ENCODE measurements at regions of chr19 and their contacts with region 1.

Region 1: GRCh38 chr19:11203194-11204075 is 6.1 kb upstream of the KANK2 start:
- DNase-seq: peak; percentile 79 to 96 (median 92)
- ATAC-seq: peak; percentile 89
- H3K4me3 ChIP-seq: no peak overlapping the region
- H3K27ac ChIP-seq: 0 out of 3 replicates have a peak overlapping the region, but pooled peaks have one; percentile 16
- H3K4me1 ChIP-seq: peaks cover 12 to 32% of the 10 kb centered on the region in 2 experiments
- H3K27me3 ChIP-seq: no peaks in the 10 kb centered on the region
- CTCF ChIP-seq: peak; percentile 77 to 89 (median 88)
- EP300 ChIP-seq: no peak
- POLR2A ChIP-seq: no peak
- RAD21 ChIP-seq: peak; percentile 79 to 85

Region 2: GRCh38 chr19:10946964-10947657 is 256.3 kb before region 1 on chr19:
- CTCF ChIA-PET with region 1: no interaction called
- POLR2A ChIA-PET with region 1: no interaction called
- in situ Hi-C with region 1: no loop called
- intact Hi-C with region 1: loop called (anchors 2 kb)
- DNase-seq: no peak
- ATAC-seq: no peak
- H3K4me3 ChIP-seq: no peak overlapping the region
- H3K27ac ChIP-seq: no peak overlapping the region
- H3K4me1 ChIP-seq: peaks cover 4 to 6% of the 10 kb centered on the region in 2 experiments; a peak in 2 of 5 replicates
- H3K27me3 ChIP-seq: no peaks in the 10 kb centered on the region
- CTCF ChIP-seq: no peak
- EP300 ChIP-seq: no peak
- POLR2A ChIP-seq: no peak
- RAD21 ChIP-seq: no peak

Region 3: GRCh38 chr19:11035441-11036377 is 167.7 kb before region 1 on chr19:
- CTCF ChIA-PET with region 1: interaction called, 6 read pairs
- POLR2A ChIA-PET with region 1: no interaction called
- in situ Hi-C with region 1: loop called (anchors 5 kb)
- intact Hi-C with region 1: loop called (anchors 1 kb)
- DNase-seq: peak; percentile 77 to 92 (median 86)
- ATAC-seq: peak; percentile 99
- H3K4me3 ChIP-seq: no peak overlapping the region
- H3K27ac ChIP-seq: no peak overlapping the region
- H3K4me1 ChIP-seq: peaks cover 0 to 13% of the 10 kb centered on the region in 2 experiments; a peak in 1 of 5 replicates
- H3K27me3 ChIP-seq: no peaks in the 10 kb centered on the region
- CTCF ChIP-seq: peak; percentile 86 to 93 (median 89)
- EP300 ChIP-seq: no peak
- POLR2A ChIP-seq: no peak
- RAD21 ChIP-seq: peak; percentile 85 to 91

Region 4: GRCh38 chr19:11125994-11126685 is 77.3 kb before region 1 on chr19:
- CTCF ChIA-PET with region 1: interaction called, 8 read pairs
- POLR2A ChIA-PET with region 1: interaction called, 5 read pairs
- in situ Hi-C with region 1: loop called (anchors 5 kb)
- intact Hi-C with region 1: no loop called
- DNase-seq: peak; percentile 57 to 81 (median 64)
- ATAC-seq: peak; percentile 83
- H3K4me3 ChIP-seq: no peak overlapping the region
- H3K27ac ChIP-seq: no peak overlapping the region; the same call in 2 of the 3 replicates
- H3K4me1 ChIP-seq: peaks cover 0 to 4% of the 10 kb centered on the region in 2 experiments; a peak in 2 of 5 replicates
- H3K27me3 ChIP-seq: no peaks in the 10 kb centered on the region
- CTCF ChIP-seq: peak; percentile 64 to 77 (median 69)
- EP300 ChIP-seq: no peak
- POLR2A ChIP-seq: peak; percentile 6
- RAD21 ChIP-seq: peak; percentile 25 to 38

Region 5: DNA sequence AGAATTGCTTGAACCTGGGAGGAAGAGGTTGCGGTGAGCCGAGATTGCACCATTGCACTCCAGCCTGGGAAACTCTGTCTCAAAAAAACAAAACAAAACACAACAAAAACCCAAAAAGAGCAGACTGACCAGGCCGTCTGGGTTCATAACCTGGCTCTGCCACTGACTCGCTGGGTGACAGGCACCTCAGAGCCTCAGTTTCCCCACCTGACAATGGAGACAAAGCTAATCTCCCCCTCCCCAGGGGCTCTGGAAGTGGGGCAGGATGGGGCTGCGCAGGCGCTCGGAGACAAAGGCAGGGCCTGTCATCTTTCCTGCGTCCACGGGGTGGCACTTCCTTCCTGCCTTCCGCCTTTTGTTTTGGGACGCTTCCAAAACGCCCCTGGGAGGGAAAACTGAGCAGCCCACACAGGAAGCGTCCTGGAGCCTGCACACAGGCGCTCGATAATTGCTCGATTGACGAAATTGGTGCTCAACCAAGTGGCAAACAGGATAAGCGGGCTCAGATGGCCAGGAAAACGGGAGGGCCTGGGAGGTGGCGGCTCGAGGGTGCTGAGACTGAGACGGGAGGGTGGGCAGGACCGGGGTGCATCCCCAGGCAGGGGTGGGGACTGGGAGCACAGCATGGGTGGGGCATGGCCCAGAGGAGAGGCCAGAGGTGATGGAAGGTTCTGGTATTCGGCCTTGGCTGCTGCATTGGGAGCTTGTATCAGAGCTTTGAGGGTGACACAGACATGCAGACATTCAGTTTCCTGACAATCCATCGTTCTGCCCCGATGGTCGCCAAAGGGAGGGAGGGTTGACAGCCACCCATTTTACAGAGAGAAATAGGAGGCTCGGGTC is 65.7 kb before region 1 on chr19:
- CTCF ChIA-PET with region 1: interaction called, 34 read pairs
- POLR2A ChIA-PET with region 1: interaction called, 4 read pairs
- in situ Hi-C with region 1: loop called (anchors 5 kb)
- intact Hi-C with region 1: loop called (anchors 1 kb)
- DNase-seq: peak; percentile 73 to 89 (median 80)
- ATAC-seq: peak; percentile 70
- H3K4me3 ChIP-seq: peak overlapping the region; percentile 25
- H3K27ac ChIP-seq: peak overlapping the region; percentile 13; the same call in 1 of the 3 replicates
- H3K4me1 ChIP-seq: peaks cover 33 to 45% of the 10 kb centered on the region in 2 experiments
- H3K27me3 ChIP-seq: no peaks in the 10 kb centered on the region
- CTCF ChIP-seq: peak; percentile 86 to 92 (median 87)
- EP300 ChIP-seq: no peak
- POLR2A ChIP-seq: no peak
- RAD21 ChIP-seq: peak; percentile 94

Region 6: DNA sequence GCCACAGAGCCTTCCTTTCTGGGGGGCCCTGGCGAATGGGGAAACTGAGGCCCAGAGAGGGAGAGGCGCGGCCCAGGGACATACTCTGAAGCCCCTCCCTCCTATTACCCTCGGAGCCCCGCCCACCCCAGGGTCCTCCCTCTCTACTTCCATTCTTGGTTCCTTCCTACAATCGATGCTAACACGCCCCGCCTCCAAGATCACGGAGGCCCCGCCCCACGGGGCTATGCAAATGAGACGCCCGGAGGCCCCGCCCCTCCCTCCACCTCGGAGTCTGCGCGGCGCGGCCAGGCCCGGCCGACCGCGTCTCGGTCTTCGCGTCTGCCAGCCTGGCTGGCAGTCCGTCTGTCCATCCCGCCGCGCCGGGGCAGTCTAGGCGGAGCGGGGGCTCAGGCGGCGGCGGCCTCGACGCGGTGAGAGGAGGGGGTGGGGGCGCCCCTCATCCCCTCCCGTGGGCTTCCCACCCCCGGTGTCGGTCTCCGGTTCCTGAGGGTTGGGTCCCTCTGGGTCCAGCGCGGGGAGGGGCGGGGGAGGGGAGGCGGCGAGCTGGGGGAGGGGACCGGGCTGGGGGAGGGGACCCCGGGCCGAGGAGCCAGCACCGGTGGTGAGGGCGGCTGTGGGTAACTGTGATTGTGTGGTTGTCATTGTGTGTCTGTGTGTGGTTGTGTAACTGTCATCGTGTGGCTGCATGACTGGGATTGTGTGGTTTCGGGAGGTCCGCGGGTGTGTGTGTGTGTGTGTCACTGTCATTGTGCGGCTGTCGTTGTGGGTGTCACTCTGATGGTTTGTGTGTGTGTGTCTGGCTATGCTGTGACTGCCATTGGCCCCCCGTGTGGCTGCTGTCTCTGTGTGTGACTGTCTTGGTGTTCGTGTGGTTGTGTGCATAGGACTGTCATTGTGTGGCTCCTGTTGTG is 152.0 kb after region 1 on chr19 and contains the start of gene PLPPR2:
- CTCF ChIA-PET with region 1: no interaction called
- POLR2A ChIA-PET with region 1: no interaction called
- in situ Hi-C with region 1: no loop called
- intact Hi-C with region 1: no loop called
- DNase-seq: peak; percentile 94 to 96 (median 96)
- ATAC-seq: peak; percentile 98
- H3K4me3 ChIP-seq: peak within 1 kb of the TSS; percentile 57
- H3K27ac ChIP-seq: peak within 1 kb of the TSS; percentile 46; the same call in 2 of the 3 replicates
- H3K4me1 ChIP-seq: peaks cover 24 to 66% of the 10 kb centered on the region in 2 experiments
- H3K27me3 ChIP-seq: no peaks in the 10 kb centered on the region
- CTCF ChIP-seq: no peak
- EP300 ChIP-seq: no peak
- POLR2A ChIP-seq: peak; percentile 47; the same call in 1 of the 2 replicates
- RAD21 ChIP-seq: no peak
- polyA plus RNA-seq, gene PLPPR2: 0.49 TPM